PC-9 (cell line): ENCODE measurements at regions of chr12 and their contacts with region 1.

Region 1: DNA sequence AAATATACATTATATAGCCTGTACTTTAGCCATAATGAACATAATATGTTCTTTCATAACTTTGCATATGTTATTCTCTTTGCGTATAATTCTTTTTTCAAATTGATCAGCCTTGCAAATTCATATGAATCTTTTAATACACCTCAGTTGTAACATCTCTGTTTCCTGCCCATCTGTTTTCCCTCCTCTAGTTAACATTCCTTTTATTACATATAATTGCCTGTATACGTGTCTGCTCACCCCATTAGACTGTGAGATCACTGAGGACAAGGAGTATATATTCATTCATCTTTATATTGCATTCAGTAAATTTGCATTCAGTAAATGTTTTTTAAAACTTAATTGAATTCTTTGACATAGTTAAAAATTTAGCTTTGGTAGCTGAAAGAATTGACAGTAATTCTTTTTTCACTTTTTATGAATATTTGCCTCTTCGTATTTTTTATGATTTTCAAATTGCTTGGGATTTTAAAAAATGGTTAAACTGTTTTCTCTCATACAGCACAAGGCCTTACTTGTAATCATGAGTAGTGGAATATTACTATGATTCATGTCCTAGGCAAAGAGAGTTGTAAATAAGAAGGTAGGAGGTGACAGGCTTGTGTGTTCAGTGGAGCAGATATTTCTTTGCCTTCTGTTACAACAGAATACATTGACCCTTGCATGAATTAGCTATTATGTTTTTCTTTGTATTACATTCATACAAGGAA is 32.8 kb upstream of the KLHL42 start:
- DNase-seq: peak in 1 of 2 experiments; percentile 82
- H3K4me3 ChIP-seq: no peak overlapping the region
- H3K27ac ChIP-seq: peak overlapping the region; percentile 91
- H3K4me1 ChIP-seq: peaks cover 42% of the 10 kb centered on the region
- H3K27me3 ChIP-seq: no peaks in the 10 kb centered on the region
- CTCF ChIP-seq: no peak

Region 2: GRCh38 chr12:28237423-28237822 is 490.2 kb after region 1 on chr12:
- CTCF ChIA-PET with region 1: interaction called, 10 read pairs
- POLR2A ChIA-PET with region 1: no interaction called
- intact Hi-C with region 1: no loop called
- DNase-seq: no peak
- H3K4me3 ChIP-seq: no peak overlapping the region
- H3K27ac ChIP-seq: no peak overlapping the region
- H3K4me1 ChIP-seq: no peaks in the 10 kb centered on the region
- H3K27me3 ChIP-seq: no peaks in the 10 kb centered on the region
- CTCF ChIP-seq: no peak; the same call in 1 of the 2 replicates